RWPE1 (cell line): ENCODE measurements at regions of chr20 and their contacts with region 1.

Region 1: GRCh38 chr20:36745927-36746659 is at the start of gene NDRG3:
- DNase-seq: peak; percentile 99
- H3K27ac ChIP-seq: peak within 1 kb of the TSS; percentile 70
- CTCF ChIP-seq: peak; percentile 62

Region 2: GRCh38 chr20:36712775-36713174 is 33.3 kb before region 1 on chr20:
- CTCF ChIA-PET with region 1: interaction called, 13 read pairs
- POLR2A ChIA-PET with region 1: no interaction called
- DNase-seq: no peak
- H3K27ac ChIP-seq: no peak overlapping the region
- CTCF ChIP-seq: no peak